BJ (cell line): ENCODE measurements at regions of chr21 and their contacts with region 1.

Region 1: GRCh38 chr21:34202553-34203372 is 129.4 kb downstream of the MRPS6 start:
- DNase-seq: no peak
- H3K4me3 ChIP-seq: no peak overlapping the region
- H3K27me3 ChIP-seq: no peaks in the 10 kb centered on the region
- CTCF ChIP-seq: no peak

Region 2: GRCh38 chr21:34215911-34216717 is 13.4 kb after region 1 on chr21:
- CTCF ChIA-PET with region 1: interaction called, 21 read pairs
- POLR2A ChIA-PET with region 1: no interaction called
- DNase-seq: no peak
- H3K4me3 ChIP-seq: no peak overlapping the region
- H3K27me3 ChIP-seq: 0 out of 2 replicates have a peak, but pooled peaks cover 1% of the 10 kb centered on the region
- CTCF ChIP-seq: no peak

Region 3: GRCh38 chr21:34372321-34372720 is 169.6 kb after region 1 on chr21:
- CTCF ChIA-PET with region 1: no interaction called
- POLR2A ChIA-PET with region 1: no interaction called
- DNase-seq: no peak
- H3K4me3 ChIP-seq: no peak overlapping the region
- H3K27me3 ChIP-seq: no peaks in the 10 kb centered on the region; the same call in 1 of the 2 replicates
- CTCF ChIP-seq: no peak